Right ventricle myocardium inferior (tissue), 1 donor: ENCODE measurements at regions of chr9 and their contacts with region 1.

Region 1: DNA sequence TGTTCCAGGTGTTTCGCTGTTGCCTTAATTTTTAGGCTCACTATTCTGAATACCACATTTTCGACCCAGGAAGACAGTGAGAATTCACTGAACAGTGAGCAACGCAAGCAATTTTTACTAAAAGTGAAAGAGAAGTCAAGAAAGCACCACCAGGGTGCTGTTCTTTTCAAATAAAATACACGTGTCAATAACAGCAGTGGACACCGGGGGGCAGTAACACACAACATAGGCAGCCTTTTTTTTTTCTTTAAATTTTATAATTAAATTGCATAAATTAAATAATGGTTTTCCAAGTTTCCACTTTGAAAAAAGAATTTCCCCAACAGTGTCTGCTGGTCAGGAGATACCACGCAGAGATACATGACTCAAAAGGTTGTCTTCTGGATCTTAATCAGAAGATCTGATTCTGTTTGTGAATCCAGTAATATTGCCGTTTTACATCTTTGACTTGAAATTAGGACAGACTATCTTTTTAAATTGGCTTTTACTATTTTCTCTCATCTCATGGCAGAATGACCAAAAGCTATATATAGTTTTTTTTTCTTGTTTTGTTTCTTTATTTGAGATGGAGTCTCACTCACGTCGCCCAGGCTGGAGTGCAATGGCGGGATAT is 47.1 kb upstream of the SH3GL2 start:
- DNase-seq: no peak
- ATAC-seq: no peak

Region 2: DNA sequence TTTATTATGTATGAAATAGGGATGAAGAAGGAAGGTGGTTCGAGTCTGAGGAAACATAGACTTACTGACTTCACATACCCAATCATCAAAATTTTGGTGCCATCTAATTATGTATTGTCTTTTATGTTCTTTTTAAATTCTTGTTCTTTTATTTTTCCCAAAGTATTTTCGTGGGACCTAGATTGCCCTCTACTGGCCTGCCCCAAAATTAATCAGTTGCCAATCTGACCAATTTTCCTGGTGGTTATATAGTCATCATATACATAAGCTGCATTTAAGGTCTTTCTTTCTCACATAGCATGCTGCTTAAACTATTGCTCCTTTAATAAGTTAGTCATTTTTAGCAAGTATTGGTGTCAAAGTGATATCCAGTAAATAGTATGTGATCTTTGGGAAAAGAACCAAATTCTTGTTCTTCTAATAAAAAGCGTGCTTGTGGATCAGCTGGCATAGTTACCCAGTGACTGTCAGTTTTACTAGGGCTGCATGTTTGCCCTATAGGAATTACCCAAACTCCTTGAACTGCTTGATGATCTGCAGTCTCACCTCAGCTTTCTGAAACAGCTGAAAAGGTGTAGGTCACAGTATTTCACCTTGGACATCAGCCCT is 270.6 kb after region 1 on chr9:
- intact Hi-C with region 1: loop called (anchors 2 kb)
- DNase-seq: no peak
- ATAC-seq: no peak

Region 3: GRCh38 chr9:18149471-18150011 is 617.8 kb after region 1 on chr9:
- intact Hi-C with region 1: loop called (anchors 5 kb)
- DNase-seq: no peak
- ATAC-seq: no peak

Region 4: GRCh38 chr9:18208154-18209059 is 676.7 kb after region 1 on chr9:
- intact Hi-C with region 1: loop called (anchors 5 kb)
- DNase-seq: no peak
- ATAC-seq: no peak